A673 (cell line): ENCODE measurements at regions of chr9 and their contacts with region 1.

Region 1: GRCh38 chr9:13588151-13589033 is 308.9 kb upstream of the MPDZ start:
- DNase-seq: no peak
- H3K4me3 ChIP-seq: no peak overlapping the region
- H3K27ac ChIP-seq: no peak overlapping the region
- H3K4me1 ChIP-seq: no peaks in the 10 kb centered on the region
- H3K27me3 ChIP-seq: peaks cover 6% of the 10 kb centered on the region
- CTCF ChIP-seq: no peak

Region 2: DNA sequence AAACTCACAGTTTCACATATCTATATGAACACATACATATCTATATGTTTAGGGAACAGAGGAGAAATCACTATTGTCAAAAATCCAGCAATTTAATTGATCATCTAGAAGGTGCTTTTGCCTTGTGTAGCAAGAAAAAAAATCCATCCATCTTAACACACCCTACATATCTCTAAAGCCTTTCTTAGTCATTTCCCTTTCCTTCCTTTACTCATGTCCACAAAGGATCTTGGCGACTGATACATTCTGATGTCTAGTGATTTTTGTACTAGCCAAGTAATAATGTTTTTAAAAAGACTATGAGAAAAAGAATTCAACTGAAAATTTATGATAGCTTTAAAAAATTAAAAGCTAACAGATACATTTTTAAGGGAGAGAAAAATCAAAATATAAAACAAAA is 1082.3 kb after region 1 on chr9:
- CTCF ChIA-PET with region 1: no interaction called
- POLR2A ChIA-PET with region 1: interaction called, 21 read pairs
- intact Hi-C with region 1: no loop called
- DNase-seq: no peak
- H3K4me3 ChIP-seq: no peak overlapping the region
- H3K27ac ChIP-seq: peak overlapping the region; percentile 12
- H3K4me1 ChIP-seq: no peaks in the 10 kb centered on the region
- H3K27me3 ChIP-seq: no peaks in the 10 kb centered on the region
- CTCF ChIP-seq: no peak